ENCODE measurements at regions of chr6 and their contacts with region 1.

Region 1: DNA sequence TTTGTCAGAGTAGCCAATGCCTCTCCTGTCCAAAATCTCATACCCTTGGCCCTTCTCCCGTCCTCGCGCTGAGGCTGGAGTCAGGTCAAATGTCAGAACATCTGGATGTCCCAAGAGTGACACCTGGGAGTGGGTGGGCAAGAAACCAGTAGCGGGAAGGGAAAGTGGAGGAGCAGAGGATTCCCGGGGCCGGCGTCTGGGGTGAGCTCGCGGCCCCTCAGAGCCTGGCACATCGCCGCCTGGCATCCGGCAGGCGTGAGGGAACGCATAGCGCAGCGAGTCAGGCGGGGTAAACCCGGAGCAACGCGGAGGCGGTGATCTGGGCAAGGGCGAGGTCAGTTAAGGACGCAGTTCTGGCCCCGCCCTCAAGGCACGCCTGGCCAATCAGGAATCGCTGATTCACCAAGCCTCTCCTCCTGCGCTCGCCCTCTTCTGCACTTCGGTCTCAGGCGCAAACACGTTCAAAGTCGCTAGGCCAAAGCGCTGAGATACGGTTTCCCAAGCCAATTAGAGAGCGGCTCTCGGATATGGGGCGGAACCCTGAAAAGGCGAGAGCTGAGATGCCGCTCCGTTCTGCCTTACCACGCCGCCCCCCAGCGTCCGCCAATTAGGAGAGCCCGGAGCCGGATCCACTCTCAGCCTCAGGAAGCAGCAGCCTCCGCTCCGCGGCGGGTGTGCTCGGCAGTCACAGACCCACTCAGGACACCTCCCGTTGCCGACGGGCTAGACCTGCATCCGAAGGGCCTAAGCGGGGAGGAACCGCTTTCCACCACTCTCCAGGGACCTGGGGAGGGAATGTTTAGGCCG is 22.5 kb downstream of the VPS52 start:
- DNase-seq: peak; percentile 98
- ATAC-seq: peak; percentile 83
- H3K4me3 ChIP-seq: peak overlapping the region; percentile 70
- H3K27ac ChIP-seq: peak overlapping the region; percentile 72
- H3K4me1 ChIP-seq: peaks cover 30% of the 10 kb centered on the region
- H3K27me3 ChIP-seq: no peaks in the 10 kb centered on the region
- CTCF ChIP-seq: 0 out of 2 replicates have a peak, but pooled peaks have one; percentile 15

Region 2: GRCh38 chr6:33014841-33015634 is 234.1 kb before region 1 on chr6:
- CTCF ChIA-PET with region 1: no interaction called
- POLR2A ChIA-PET with region 1: no interaction called
- intact Hi-C with region 1: loop called (anchors 1 kb)
- DNase-seq: peak; percentile 83
- ATAC-seq: peak; percentile 74
- H3K4me3 ChIP-seq: no peak overlapping the region
- H3K27ac ChIP-seq: no peak overlapping the region
- H3K4me1 ChIP-seq: no peaks in the 10 kb centered on the region
- H3K27me3 ChIP-seq: peaks cover 83% of the 10 kb centered on the region
- CTCF ChIP-seq: peak; percentile 82

Region 3: DNA sequence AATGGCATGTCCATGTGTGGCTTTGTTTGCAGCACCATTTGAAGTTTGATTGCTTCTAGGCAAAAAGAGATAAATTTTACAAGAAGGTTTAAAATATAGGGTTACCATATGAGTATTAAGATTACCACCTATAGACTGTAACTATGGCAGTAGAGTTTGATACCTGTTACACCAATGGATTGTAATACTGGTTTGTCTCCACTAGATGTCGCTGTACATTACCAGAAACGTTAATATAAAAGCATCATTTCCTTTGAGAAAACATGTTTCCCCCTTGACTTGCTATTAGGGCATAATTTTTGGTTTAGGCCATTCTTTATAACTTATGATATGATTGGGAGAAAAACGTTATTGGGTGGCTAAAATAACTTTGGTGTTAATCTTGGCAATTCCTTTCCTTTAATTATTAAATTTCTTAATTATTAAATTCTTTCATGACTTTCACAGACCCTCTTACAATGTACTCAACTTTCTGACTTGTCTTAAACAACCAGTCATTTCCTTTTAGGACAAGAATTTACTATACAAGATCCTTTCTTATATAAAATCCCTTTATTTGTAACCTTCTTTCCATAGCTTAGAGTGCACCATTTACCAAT is 130.5 kb before region 1 on chr6:
- CTCF ChIA-PET with region 1: no interaction called
- POLR2A ChIA-PET with region 1: no interaction called
- intact Hi-C with region 1: loop called (anchors 1 kb)
- DNase-seq: peak; percentile 77
- ATAC-seq: no peak
- H3K4me3 ChIP-seq: no peak overlapping the region
- H3K27ac ChIP-seq: no peak overlapping the region
- H3K4me1 ChIP-seq: no peaks in the 10 kb centered on the region
- H3K27me3 ChIP-seq: peaks cover 60% of the 10 kb centered on the region
- CTCF ChIP-seq: peak; percentile 77

Region 4: GRCh38 chr6:33123732-33124524 is 125.2 kb before region 1 on chr6:
- CTCF ChIA-PET with region 1: interaction called, 3 read pairs
- POLR2A ChIA-PET with region 1: no interaction called
- intact Hi-C with region 1: loop called (anchors 1 kb)
- DNase-seq: peak; percentile 84
- ATAC-seq: peak; percentile 51; the same call in 1 of the 2 replicates
- H3K4me3 ChIP-seq: no peak overlapping the region
- H3K27ac ChIP-seq: no peak overlapping the region
- H3K4me1 ChIP-seq: no peaks in the 10 kb centered on the region
- H3K27me3 ChIP-seq: peaks cover 37% of the 10 kb centered on the region
- CTCF ChIP-seq: peak; percentile 82

Region 5: DNA sequence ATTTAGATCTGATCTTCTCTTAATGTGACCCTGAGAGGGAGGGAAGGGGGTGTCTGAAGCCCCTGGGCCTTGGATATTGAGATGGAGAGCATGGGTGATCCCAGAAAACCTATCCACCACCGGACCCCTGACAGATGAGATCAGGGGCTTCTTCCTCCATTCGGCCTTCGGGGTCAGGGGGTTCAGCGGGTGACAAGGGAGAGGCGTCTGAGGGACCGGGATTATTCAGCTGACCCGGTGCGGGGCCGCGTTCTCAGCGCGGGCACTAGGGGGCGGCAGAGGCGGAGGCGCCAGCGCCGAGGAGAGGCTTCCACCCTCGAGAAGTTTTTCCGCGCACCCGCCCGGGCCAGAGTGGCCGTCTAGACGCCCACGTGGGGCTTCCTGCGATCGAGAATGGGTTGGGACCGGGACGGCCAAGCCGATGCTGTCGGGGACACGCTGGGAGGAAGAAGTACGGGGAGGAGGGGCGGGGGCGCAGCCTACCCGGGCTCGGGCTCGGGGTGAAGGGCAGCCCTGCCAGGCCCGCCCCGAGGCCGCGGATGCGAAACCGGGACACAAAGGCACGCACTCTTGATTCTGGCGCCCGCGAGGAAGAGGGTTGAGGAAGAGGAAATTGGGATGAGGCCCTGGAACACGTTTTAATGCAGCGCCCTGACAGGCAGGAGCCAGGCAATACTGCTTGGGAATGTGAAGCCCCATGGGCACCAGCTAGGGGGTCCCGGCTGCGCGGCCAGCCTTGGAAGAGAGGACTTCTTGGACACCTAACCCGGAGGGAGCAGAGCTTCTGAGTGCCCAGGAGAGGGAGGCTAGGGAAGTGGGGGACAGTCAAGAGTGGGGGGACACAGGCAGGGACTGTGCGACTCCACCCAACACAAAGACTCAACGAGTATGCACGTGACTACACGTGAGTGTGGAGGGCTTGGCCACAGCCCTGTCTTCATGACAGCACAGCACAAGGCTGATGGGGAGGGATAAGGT is 87.5 kb before region 1 on chr6:
- CTCF ChIA-PET with region 1: interaction called, 3 read pairs
- POLR2A ChIA-PET with region 1: no interaction called
- intact Hi-C with region 1: loop called (anchors 2 kb)
- DNase-seq: peak; percentile 75
- ATAC-seq: peak; percentile 81
- H3K4me3 ChIP-seq: peak overlapping the region; percentile 69
- H3K27ac ChIP-seq: peak overlapping the region; percentile 38
- H3K4me1 ChIP-seq: peaks cover 18% of the 10 kb centered on the region
- H3K27me3 ChIP-seq: no peaks in the 10 kb centered on the region
- CTCF ChIP-seq: peak; percentile 91

Region 6: DNA sequence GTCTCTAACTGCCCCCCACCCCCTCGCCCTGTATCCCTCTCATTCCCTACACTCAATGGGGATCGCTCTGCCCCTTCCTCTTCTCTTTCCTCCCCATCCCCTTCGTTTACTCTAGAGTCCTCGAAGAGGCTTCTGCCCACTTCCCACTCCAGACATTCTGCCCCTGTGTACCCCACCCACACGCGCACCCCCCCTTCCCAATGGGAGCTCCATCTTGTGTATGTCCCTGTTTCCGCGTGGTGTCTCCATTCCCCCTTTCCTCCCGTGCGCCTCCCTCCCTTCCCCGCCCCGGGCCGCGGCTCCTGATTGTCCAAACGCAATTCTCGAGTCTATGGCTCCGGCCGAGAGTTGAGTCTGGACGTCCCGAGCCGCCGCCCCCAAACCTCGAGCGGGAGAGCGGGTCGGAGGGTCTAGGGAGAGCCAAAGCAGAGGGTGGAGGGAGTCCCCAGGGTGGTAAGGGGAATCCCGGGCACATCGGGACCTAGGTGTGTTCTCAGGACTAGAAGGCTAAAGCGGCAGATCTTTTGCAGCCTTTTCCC is 41.5 kb before region 1 on chr6:
- CTCF ChIA-PET with region 1: interaction called, 3 read pairs
- POLR2A ChIA-PET with region 1: interaction called, 6 read pairs
- intact Hi-C with region 1: loop called (anchors 2 kb)
- DNase-seq: peak; percentile 38
- ATAC-seq: peak; percentile 10
- H3K4me3 ChIP-seq: peak overlapping the region; percentile 84
- H3K27ac ChIP-seq: peak overlapping the region; percentile 84
- H3K4me1 ChIP-seq: peaks cover 43% of the 10 kb centered on the region
- H3K27me3 ChIP-seq: no peaks in the 10 kb centered on the region
- CTCF ChIP-seq: no peak

Region 7: GRCh38 chr6:33299237-33299944 is 50.3 kb after region 1 on chr6:
- CTCF ChIA-PET with region 1: interaction called, 5 read pairs
- POLR2A ChIA-PET with region 1: no interaction called
- intact Hi-C with region 1: loop called (anchors 2 kb)
- DNase-seq: peak; percentile 93
- ATAC-seq: peak; percentile 55
- H3K4me3 ChIP-seq: peak overlapping the region; percentile 78
- H3K27ac ChIP-seq: peak overlapping the region; percentile 92
- H3K4me1 ChIP-seq: peaks cover 15% of the 10 kb centered on the region
- H3K27me3 ChIP-seq: no peaks in the 10 kb centered on the region
- CTCF ChIP-seq: peak; percentile 87

Region 8: DNA sequence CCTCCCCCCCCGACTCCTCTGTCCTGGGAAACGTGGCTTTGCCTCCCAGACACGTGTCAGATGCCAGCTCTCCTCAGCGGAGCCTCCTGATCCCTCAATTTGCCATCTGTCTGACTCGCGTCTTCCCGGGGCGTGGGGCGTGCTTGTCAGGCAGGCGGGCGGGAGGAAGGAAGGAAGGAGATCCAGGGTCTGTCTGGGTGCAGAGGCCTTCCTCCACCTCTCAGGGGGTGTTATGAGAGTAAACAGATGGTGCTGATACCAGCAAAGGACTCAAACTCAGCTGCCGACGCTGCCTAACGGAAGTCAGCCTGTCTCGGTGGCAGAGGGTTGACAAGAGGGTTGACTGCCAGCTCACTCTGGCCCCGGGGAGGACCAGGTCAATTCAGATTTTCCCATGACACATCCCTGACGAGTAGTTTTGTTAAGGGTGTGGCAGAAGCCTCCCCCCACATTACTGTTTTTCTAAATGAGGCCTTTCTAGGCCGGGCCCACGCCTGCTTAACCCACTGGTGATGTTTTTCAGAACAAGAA is 445.3 kb after region 1 on chr6:
- CTCF ChIA-PET with region 1: no interaction called
- POLR2A ChIA-PET with region 1: no interaction called
- intact Hi-C with region 1: no loop called
- DNase-seq: peak; percentile 84
- ATAC-seq: peak; percentile 65
- H3K4me3 ChIP-seq: no peak overlapping the region
- H3K27ac ChIP-seq: peak overlapping the region; percentile 94
- H3K4me1 ChIP-seq: peaks cover 57% of the 10 kb centered on the region
- H3K27me3 ChIP-seq: no peaks in the 10 kb centered on the region
- CTCF ChIP-seq: no peak

Measured in PC-3 (cell line).